Upper lobe of right lung (tissue), 1 donor: ENCODE measurements at regions of chr22 and their contacts with region 1.

Region 1: DNA sequence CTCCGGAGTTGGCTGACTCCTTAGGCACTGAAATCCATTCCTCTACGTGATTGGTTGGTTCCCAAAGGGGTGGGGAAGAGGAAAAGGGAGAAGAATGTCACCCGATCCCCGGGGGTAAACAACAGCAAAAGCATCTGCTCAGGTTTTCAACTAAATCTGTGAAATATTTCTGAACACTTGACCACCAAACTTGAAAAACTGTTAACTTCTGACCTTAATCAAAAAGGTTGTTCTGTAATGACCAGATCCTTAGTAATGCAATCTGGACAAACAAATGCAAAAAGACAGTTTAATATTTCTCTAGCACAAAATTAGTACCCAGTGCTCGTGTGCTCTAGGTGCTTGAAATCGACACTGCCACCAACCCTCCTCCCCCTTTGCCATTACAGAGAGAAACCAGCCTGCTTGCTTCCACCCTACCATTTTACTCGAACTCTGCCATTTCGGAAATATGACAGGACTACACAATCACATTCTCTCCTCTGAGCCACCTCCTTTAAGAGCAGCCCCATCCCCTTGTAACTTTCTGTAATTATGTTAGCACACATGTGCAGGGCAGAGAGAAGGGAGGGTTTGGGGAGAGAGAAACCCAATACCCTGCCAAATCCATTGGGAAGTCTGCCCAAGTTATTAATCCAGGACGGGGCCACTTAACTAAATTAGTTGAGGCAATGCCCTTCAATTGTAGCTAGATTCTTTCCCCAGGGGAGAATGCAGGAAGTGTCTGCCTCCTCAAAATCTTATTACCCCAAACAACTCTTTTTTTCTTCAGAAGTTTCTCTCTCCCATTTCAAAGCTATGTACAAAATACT is 113.8 kb downstream of the RBFOX2 start:
- DNase-seq: no peak
- ATAC-seq: peak; percentile 99
- H3K4me3 ChIP-seq: peak overlapping the region; percentile 56
- H3K27ac ChIP-seq: peak overlapping the region; percentile 81
- H3K4me1 ChIP-seq: peaks cover 36% of the 10 kb centered on the region
- H3K27me3 ChIP-seq: no peaks in the 10 kb centered on the region
- CTCF ChIP-seq: no peak

Region 2: DNA sequence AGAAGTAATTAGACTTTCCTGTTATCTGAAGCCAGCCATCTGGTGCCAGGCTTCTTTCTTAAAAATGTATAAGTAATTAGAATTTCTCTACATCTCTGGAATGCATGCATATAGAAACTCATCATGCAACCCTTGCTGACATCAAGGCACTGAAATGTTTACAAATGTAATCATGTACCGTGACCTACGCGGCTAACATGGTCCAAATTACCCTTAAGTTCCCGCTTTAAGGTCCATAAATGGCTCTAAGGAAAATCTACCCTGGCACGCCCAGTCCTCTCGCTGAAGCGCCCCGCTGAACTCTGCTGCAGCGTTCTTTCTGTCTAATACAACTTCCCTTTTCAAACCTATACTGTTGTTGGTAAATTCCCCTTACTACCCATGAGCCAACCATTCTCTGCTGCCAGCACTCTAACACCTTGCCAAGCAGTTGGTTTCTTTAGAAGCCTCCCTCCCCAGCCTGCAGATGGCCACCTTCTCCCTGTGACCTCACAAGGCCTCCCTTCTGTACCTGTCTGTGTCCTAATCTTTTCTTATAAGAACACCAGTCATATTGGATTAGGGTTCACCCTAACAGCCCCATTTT is 547.5 kb before region 1 on chr22:
- intact Hi-C with region 1: no loop called
- DNase-seq: peak; percentile 66
- ATAC-seq: peak; percentile 68
- H3K4me3 ChIP-seq: no peak overlapping the region
- H3K27ac ChIP-seq: no peak overlapping the region
- H3K4me1 ChIP-seq: peaks cover 8% of the 10 kb centered on the region
- H3K27me3 ChIP-seq: no peaks in the 10 kb centered on the region
- CTCF ChIP-seq: no peak

Region 3: DNA sequence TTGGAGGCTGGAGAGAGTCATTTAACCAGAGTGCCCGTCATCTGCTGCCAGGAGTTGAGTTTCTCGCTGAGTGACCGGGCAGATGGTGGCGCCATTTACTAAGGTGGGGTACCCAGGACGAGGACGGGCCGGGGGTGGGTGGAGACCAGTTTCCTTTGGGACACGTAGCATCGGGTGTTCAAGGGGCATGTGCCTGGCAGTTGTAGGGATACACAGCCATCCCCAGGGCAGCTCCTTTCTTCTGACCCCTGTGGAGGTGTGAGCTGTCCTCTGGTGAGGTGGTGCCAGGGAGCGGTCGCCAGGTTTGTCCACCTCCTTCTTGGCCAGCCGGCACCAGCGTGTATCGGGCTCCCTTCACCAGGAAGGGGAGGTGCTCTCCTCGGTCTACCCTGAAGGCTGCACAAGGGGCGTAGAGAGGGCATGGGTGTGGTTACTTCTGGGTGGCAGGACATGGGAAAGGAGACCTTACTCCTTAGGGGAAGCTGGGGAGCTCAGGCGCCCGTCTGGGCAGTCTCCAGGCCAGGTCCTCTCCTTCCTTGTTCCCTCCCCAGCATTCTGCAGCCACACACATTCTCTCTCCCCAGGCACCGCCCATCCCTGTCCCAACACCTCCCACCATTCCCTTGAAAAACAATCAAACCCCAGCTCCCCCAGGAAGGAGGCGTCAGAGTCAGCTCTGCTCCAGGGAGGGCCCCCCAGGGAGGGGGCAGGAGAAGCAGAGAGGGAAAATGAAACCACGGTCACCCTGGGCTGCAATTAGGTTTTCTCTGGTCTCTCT is 287.4 kb before region 1 on chr22:
- intact Hi-C with region 1: loop called (anchors 10 kb)
- DNase-seq: peak; percentile 90
- ATAC-seq: peak; percentile 86
- H3K4me3 ChIP-seq: peak overlapping the region; percentile 62
- H3K27ac ChIP-seq: peak overlapping the region; percentile 83
- H3K4me1 ChIP-seq: peaks cover 15% of the 10 kb centered on the region
- H3K27me3 ChIP-seq: no peaks in the 10 kb centered on the region
- CTCF ChIP-seq: peak; percentile 51

Region 4: DNA sequence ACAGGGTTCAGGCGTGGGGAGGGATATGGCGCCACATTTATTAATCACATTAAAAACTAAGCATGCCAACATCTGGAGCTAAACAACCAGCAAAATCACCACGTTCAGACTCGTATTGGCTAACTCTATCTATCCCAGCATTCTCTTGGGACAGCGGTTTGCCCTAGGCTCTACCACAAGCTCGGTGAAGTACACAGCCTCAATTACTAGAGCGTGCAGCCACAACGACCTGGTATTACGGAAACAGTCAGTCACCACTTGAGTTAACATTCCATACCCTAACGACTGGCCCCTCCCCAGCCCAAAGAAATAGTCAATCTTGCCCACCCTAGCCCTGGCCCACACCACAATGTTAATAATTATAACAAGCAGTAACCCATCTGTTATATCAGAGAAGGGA is 165.1 kb before region 1 on chr22:
- intact Hi-C with region 1: loop called (anchors 10 kb)
- DNase-seq: no peak
- ATAC-seq: no peak
- H3K4me3 ChIP-seq: no peak overlapping the region
- H3K27ac ChIP-seq: no peak overlapping the region
- H3K4me1 ChIP-seq: peaks cover 8% of the 10 kb centered on the region
- H3K27me3 ChIP-seq: no peaks in the 10 kb centered on the region
- CTCF ChIP-seq: no peak